Endothelial cell of umbilical vein (primary cell): ENCODE measurements at regions of chr11 and their contacts with region 1.

Region 1: GRCh38 chr11:134050541-134051383 is 18.1 kb upstream of the JAM3 start:
- DNase-seq: peak; percentile 69
- H3K4me3 ChIP-seq: peak overlapping the region; percentile 14 to 44 (median 27)
- H3K27ac ChIP-seq: peak overlapping the region; percentile 22
- H3K4me1 ChIP-seq: no peaks in the 10 kb centered on the region
- H3K27me3 ChIP-seq: peaks cover 2 to 6% of the 10 kb centered on the region in 2 experiments
- CTCF ChIP-seq: peak; percentile 86 to 95
- POLR2A ChIP-seq: no peak

Region 2: GRCh38 chr11:133082851-133083488 is 967.8 kb before region 1 on chr11:
- CTCF ChIA-PET with region 1: interaction called, 12 read pairs
- POLR2A ChIA-PET with region 1: no interaction called
- dilution Hi-C with region 1: no loop called
- intact Hi-C with region 1: no loop called
- DNase-seq: peak; percentile 45
- H3K4me3 ChIP-seq: peak overlapping the region in 2 of 3 experiments; percentile 30 to 34
- H3K27ac ChIP-seq: no peak overlapping the region
- H3K4me1 ChIP-seq: no peaks in the 10 kb centered on the region
- H3K27me3 ChIP-seq: no peaks in the 10 kb centered on the region
- CTCF ChIP-seq: peak; percentile 74 to 99
- POLR2A ChIP-seq: no peak

Region 3: DNA sequence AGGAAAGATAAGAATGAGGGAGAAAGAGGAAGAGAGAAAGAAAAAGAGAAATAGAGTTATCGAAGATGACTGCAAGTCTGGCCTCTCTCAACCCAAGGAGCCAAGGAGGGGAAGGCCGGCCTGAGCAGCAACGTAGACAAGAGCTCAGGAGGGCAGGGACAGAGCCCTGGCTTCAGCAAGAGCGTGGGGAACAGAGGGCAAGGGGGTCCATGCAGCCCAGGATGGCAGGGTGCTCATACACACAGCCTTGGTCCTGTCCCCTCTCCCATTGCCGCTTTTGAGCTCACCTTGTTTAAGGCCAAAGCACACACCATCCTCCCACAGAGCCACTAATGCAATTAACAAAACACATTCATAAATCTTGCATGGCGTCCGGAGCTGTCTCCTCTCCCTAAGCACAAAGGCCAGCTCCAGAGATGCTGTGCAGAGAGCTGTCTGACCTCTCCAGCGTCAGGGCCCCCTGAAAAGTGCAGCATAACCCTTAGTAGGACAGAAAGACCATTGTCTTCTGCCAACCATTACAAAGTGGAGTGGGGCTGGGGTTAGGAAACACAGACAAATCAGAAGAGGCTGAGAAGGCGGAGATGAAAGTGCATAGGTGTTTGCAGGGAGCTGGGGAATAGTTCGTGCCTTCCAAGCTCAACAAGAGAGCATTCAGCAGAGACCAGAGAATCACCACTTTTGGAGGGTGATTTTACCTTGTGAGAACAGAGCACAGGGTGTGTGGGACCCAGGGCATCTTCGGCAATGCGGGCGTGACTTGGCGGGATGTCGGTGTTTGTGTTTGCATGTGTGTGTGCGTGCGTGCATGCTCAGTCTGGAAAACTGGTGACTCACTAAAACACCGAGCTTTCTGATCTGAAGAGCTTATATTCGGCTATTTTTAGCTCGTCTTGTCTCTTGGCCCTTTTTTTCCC is 10.1 kb before region 1 on chr11:
- CTCF ChIA-PET with region 1: interaction called, 32 read pairs
- POLR2A ChIA-PET with region 1: no interaction called
- dilution Hi-C with region 1: no loop called
- intact Hi-C with region 1: no loop called
- DNase-seq: no peak
- H3K4me3 ChIP-seq: no peak overlapping the region
- H3K27ac ChIP-seq: no peak overlapping the region
- H3K4me1 ChIP-seq: peaks cover 9% of the 10 kb centered on the region
- H3K27me3 ChIP-seq: peaks cover 3 to 6% of the 10 kb centered on the region in 2 experiments
- CTCF ChIP-seq: no peak
- POLR2A ChIP-seq: no peak

Region 4: GRCh38 chr11:134074346-134074745 is 23.6 kb after region 1 on chr11:
- CTCF ChIA-PET with region 1: interaction called, 25 read pairs
- POLR2A ChIA-PET with region 1: no interaction called
- dilution Hi-C with region 1: no loop called
- intact Hi-C with region 1: no loop called
- DNase-seq: peak; percentile 18
- H3K4me3 ChIP-seq: no peak overlapping the region
- H3K27ac ChIP-seq: no peak overlapping the region
- H3K4me1 ChIP-seq: peaks cover 22% of the 10 kb centered on the region
- H3K27me3 ChIP-seq: no peaks in the 10 kb centered on the region
- CTCF ChIP-seq: no peak
- POLR2A ChIP-seq: no peak

Region 5: DNA sequence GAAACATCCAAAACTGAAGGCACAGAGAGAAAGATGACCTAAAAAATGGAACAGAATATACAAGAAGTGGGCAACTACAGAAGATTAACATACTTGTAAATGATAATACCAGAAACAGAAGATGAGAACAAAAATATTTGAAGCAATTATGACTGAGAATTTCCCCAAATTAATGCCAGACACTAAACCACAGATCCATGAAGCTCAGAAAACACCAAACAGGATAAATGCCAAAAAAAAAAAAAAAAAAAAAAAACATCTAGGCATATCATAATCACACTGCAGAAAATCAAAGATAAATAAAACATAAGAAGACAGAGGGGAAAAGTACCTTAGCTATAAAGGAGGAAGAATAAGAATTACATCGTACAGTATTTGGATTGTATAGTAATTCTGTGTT is 83.4 kb after region 1 on chr11:
- CTCF ChIA-PET with region 1: interaction called, 80 read pairs
- POLR2A ChIA-PET with region 1: interaction called, 4 read pairs
- dilution Hi-C with region 1: no loop called
- intact Hi-C with region 1: loop called (anchors 1 kb)
- DNase-seq: no peak
- H3K4me3 ChIP-seq: no peak overlapping the region
- H3K27ac ChIP-seq: no peak overlapping the region
- H3K4me1 ChIP-seq: peaks cover 7% of the 10 kb centered on the region
- H3K27me3 ChIP-seq: no peaks in the 10 kb centered on the region
- CTCF ChIP-seq: no peak
- POLR2A ChIP-seq: no peak

Region 6: DNA sequence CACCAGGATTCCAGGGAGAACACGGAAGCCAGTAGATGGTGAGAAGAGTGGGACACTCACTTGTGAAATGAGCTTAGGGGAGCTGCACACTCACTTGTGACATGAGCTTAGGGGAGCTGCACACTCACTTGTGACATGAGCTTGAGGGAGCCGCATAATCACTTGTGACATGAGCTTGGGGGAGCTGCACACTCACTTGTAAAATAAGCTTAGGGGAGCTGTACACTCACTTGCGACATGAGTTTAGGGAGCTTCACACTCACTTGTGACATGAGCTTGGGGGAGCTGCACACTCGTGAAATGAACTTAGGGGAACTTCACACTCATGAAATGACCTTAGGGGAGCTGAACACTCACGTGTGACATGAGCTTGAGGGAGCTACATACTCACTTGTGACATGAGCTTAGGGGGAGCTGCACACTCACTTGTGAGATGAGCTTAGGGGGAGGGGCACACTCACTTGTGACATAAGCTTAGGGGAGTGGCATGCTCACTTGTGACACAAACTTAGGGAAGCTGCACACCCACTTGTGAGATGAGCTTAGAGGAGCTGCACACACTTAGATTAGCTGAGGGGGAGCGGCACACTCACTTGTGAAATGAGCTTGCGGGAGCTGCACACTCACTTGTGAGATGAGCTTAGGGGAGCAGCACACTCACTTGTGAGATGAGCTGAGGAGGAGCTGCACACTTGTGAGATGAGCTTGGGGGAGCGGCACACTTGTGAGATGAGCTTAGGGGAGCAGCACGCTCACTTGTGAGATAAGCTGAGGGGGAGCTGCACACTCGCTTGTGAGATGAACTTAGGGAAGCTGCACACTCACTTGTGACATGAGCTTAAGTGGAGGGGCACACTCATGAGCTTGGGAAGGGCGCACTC is 114.0 kb after region 1 on chr11:
- CTCF ChIA-PET with region 1: interaction called, 15 read pairs
- POLR2A ChIA-PET with region 1: no interaction called
- dilution Hi-C with region 1: no loop called
- intact Hi-C with region 1: no loop called
- DNase-seq: no peak
- H3K4me3 ChIP-seq: no peak overlapping the region
- H3K27ac ChIP-seq: no peak overlapping the region
- H3K4me1 ChIP-seq: no peaks in the 10 kb centered on the region
- H3K27me3 ChIP-seq: no peaks in the 10 kb centered on the region
- CTCF ChIP-seq: no peak
- POLR2A ChIP-seq: no peak

Region 7: GRCh38 chr11:134231958-134232659 is 181.3 kb after region 1 on chr11:
- CTCF ChIA-PET with region 1: no interaction called
- POLR2A ChIA-PET with region 1: no interaction called
- dilution Hi-C with region 1: no loop called
- intact Hi-C with region 1: no loop called
- DNase-seq: no peak
- H3K4me3 ChIP-seq: no peak overlapping the region
- H3K27ac ChIP-seq: no peak overlapping the region
- H3K4me1 ChIP-seq: peaks cover 23% of the 10 kb centered on the region
- H3K27me3 ChIP-seq: no peaks in the 10 kb centered on the region
- CTCF ChIP-seq: no peak
- POLR2A ChIP-seq: no peak

Region 8: GRCh38 chr11:134385773-134386565 is 335.2 kb after region 1 on chr11:
- CTCF ChIA-PET with region 1: no interaction called
- POLR2A ChIA-PET with region 1: no interaction called
- dilution Hi-C with region 1: no loop called
- intact Hi-C with region 1: no loop called
- DNase-seq: no peak
- H3K4me3 ChIP-seq: no peak overlapping the region
- H3K27ac ChIP-seq: no peak overlapping the region
- H3K4me1 ChIP-seq: no peaks in the 10 kb centered on the region
- H3K27me3 ChIP-seq: no peaks in the 10 kb centered on the region
- CTCF ChIP-seq: no peak
- POLR2A ChIP-seq: no peak